H1 (cell line): ENCODE measurements at regions of chr9 and their contacts with region 1.

Region 1: DNA sequence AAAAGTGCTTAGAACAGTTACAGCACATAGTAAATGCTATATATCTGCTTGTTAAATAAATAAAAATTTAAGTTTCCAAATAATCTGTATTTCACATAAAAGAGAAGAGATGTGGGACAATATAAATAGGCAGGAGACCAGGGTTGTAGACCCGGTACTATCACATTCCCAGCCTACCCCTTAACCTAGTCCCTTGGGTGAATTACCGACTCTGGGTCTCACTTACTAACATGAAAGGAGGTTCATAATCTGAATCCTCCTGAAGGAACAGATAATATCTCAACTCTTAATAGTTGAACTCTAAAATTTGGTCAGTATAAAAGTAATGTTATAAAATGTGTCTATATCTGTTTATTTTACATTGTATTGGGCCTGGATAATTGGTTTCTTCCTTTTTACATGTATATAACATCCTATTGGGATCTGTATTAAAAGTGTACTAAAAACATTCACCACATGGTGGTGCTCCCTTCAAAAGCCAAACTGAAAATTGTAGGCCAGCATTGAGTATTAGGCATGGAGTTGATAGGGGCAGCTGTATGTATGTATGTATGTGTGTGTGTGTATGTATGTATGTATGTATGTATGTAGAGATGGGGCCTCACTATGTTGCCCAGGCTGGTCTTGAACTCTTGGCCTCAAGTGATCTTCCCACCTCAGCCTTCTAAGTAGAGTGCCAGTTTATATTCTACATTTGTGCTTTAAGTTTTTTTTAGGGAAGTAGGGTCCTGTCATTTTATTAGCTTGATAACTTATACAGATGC is 64.2 kb upstream of the ABL1 start:
- DNase-seq: no peak
- H3K4me3 ChIP-seq: no peak overlapping the region
- H3K27ac ChIP-seq: no peak overlapping the region
- H3K4me1 ChIP-seq: peaks cover 4 to 17% (median 6%) of the 10 kb centered on the region in 4 experiments
- H3K27me3 ChIP-seq: no peaks in the 10 kb centered on the region
- CTCF ChIP-seq: peak in 2 of 3 experiments; percentile 48 to 54; a peak in 2 of 4 replicates
- EP300 ChIP-seq: no peak
- POLR2A ChIP-seq: no peak
- RAD21 ChIP-seq: peak; percentile 73 to 76

Region 2: GRCh38 chr9:130707225-130707976 is 63.5 kb before region 1 on chr9:
- CTCF ChIA-PET with region 1: interaction called, 10 read pairs
- POLR2A ChIA-PET with region 1: no interaction called
- DNase-seq: peak in 1 of 2 experiments; percentile 73
- H3K4me3 ChIP-seq: no peak overlapping the region
- H3K27ac ChIP-seq: no peak overlapping the region
- H3K4me1 ChIP-seq: no peaks in the 10 kb centered on the region
- H3K27me3 ChIP-seq: no peaks in the 10 kb centered on the region
- CTCF ChIP-seq: peak in 2 of 3 experiments; percentile 47 to 50; a peak in 2 of 4 replicates
- EP300 ChIP-seq: no peak
- POLR2A ChIP-seq: no peak
- RAD21 ChIP-seq: peak; percentile 70 to 71

Region 3: DNA sequence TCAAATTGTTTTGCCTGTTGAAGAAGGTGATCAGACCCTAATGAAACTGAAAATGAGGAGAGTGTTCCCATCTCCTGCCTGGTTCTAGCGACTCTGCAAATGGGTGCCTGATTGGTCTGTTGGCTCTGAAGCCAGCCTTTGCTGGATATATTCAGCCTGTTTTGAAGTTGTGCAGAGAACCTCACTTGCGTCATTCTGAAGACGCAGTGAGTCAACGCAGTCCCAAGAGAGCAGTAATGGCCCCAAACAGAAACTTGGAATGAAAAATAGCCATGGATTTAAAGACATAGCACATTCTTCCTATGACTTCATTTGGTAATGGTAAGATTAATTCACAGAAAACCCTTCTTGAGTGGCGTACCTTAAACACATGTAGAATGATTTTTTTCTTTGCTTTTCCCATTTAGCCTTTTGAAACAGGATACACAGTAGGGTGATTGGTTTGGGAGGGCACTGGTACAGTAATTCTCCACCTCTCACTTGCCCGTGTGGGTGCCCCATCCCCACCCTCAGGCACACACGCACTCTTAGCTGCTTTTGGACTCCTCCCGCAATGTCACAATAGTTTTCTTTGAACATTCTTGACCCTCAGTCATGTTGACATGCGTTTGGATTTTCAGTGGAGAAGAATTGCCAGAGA is 10.1 kb after region 1 on chr9:
- CTCF ChIA-PET with region 1: interaction called, 19 read pairs
- POLR2A ChIA-PET with region 1: no interaction called
- DNase-seq: no peak
- H3K4me3 ChIP-seq: no peak overlapping the region
- H3K27ac ChIP-seq: no peak overlapping the region
- H3K4me1 ChIP-seq: peaks cover 0 to 3% (median under 1%) of the 10 kb centered on the region in 4 experiments; a peak in 1 of 7 replicates
- H3K27me3 ChIP-seq: no peaks in the 10 kb centered on the region
- CTCF ChIP-seq: no peak
- EP300 ChIP-seq: no peak
- POLR2A ChIP-seq: no peak
- RAD21 ChIP-seq: no peak

Region 4: GRCh38 chr9:130824643-130825350 is 53.9 kb after region 1 on chr9:
- CTCF ChIA-PET with region 1: interaction called, 10 read pairs
- POLR2A ChIA-PET with region 1: interaction called, 3 read pairs
- DNase-seq: peak in 1 of 2 experiments; percentile 43
- H3K4me3 ChIP-seq: peak overlapping the region in 2 of 4 experiments; percentile 1 to 40; a peak in 4 of 8 replicates
- H3K27ac ChIP-seq: peak overlapping the region; percentile 68
- H3K4me1 ChIP-seq: peaks cover 11 to 28% (median 18%) of the 10 kb centered on the region in 4 experiments
- H3K27me3 ChIP-seq: no peaks in the 10 kb centered on the region
- CTCF ChIP-seq: no peak
- EP300 ChIP-seq: peak in 1 of 2 experiments; percentile 29; a peak in 1 of 3 replicates
- POLR2A ChIP-seq: no peak
- RAD21 ChIP-seq: no peak

Region 5: DNA sequence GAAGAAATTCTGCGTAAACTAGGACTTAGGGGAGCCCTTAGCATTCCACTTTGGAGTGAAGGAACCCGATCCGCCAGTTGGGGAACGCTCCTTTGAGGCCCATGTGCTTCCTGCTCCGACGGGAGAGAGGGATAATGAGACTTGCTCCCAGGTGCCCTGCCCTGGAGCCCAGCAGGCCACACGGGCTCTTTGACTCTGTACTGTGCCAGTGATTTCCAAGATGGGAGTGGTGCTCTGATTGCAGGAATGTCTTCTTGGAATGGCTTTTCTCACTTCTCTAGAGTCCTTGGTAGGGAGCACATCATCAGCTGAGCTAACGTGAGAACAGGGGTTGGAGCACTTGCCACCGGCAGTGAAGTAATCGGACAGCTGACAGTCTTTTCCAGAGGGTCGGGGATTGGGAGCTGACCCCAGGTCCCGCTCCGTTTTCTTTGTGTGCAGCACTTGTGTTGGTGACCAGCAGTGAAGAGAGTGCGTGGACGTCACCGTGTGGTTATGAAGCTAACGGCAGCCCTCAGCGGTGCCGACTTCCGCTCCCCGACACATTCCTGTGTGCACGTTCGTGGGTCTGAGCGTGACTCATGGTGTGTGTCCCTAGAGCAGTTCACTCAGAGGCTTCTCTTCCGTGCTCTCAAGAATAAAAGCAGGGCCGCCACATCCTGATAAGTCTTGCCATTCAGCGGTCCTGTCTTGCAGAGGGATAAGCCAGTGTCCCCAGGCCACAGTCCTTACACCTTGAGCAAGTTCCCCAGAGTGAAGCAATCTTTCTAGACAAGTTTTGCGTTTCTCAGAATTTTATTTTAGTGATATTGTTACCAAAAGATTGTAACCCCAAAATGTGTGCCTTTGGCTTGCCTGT is 89.8 kb after region 1 on chr9:
- CTCF ChIA-PET with region 1: interaction called, 246 read pairs
- POLR2A ChIA-PET with region 1: no interaction called
- DNase-seq: no peak
- H3K4me3 ChIP-seq: no peak overlapping the region
- H3K27ac ChIP-seq: no peak overlapping the region
- H3K4me1 ChIP-seq: 0 out of 7 replicates have a peak, but pooled peaks cover 0 to 3% (median 0%) of the 10 kb centered on the region in 4 experiments
- H3K27me3 ChIP-seq: no peaks in the 10 kb centered on the region
- CTCF ChIP-seq: peak in 1 of 3 experiments; percentile 21; a peak in 1 of 4 replicates
- EP300 ChIP-seq: no peak
- POLR2A ChIP-seq: no peak
- RAD21 ChIP-seq: peak; percentile 15 to 17; a peak in 2 of 4 replicates